Posterior vena cava (tissue), 2 donors: ENCODE measurements at regions of chr19 and their contacts with region 1.

Region 1: DNA sequence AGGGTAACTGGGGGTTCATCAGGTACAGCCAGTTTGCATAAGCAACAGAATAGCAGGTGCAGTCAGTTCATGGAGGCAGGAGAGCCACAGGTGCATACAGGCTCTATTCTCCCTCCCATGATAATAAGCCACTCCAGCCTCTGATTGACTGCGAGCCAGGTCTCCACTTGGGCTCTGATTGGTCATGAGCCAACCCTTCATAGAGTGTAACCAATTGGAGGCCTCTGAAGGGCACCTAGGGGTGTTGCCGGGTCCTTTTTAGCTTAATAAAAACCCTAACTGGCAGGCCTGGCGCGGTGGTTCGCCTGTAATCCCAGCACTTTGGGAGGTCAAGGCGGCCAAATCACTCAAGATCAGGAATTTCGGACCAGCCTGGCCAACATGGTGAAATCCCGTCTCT is 8.7 kb upstream of the CKM start:
- DNase-seq: no peak

Region 2: GRCh38 chr19:44972802-44973201 is 358.6 kb before region 1 on chr19:
- intact Hi-C with region 1: no loop called
- DNase-seq: no peak

Region 3: GRCh38 chr19:45164577-45165335 is 166.7 kb before region 1 on chr19:
- intact Hi-C with region 1: loop called in 1 of 2 experiments (anchors 10 kb)
- DNase-seq: peak; percentile 85